B cell (primary cell): ENCODE measurements at regions of chr1 and their contacts with region 1.

Region 1: DNA sequence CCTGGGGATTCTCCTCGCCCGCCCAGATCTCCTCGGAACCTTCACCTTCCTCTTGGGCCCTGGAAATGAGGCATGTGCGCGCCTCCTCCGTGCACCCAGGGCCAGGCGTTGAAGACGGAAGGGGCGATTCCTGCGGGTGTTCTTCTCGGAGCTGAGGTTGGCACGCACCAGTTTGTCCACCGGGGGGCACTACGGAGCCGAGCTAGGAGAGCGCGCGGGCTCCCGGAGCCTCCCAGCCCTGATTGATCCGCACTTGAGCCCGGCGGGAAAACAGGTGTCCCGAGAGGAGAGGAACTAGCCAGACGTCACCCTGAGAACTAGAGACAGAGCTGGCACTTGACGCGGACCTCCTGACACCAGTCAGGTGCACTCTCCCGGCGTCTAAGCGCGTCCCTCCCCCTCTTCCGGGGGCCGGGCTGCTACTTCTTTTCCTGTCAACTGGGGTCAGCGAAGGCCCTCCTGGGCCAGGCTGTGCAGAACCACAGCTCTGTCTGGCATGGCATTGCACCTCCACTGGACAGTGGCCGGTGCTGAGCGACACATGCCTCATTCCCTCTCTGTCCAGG is 18.3 kb upstream of the SERINC2 start:
- DNase-seq: peak; percentile 87
- ATAC-seq: peak; percentile 93
- H3K4me3 ChIP-seq: peak overlapping the region; percentile 27 to 71 (median 55)
- H3K4me3 Mint-ChIP-seq: peak overlapping the region; percentile 87
- H3K27ac ChIP-seq: no peak overlapping the region
- H3K27ac Mint-ChIP-seq: peak overlapping the region; percentile 26
- H3K4me1 ChIP-seq: peaks cover 8 to 13% of the 10 kb centered on the region in 2 donors
- H3K4me1 Mint-ChIP-seq: peaks cover 13% of the 10 kb centered on the region
- H3K27me3 ChIP-seq: no peaks in the 10 kb centered on the region
- H3K27me3 Mint-ChIP-seq: no peaks in the 10 kb centered on the region
- CTCF ChIP-seq: peak; percentile 91

Region 2: GRCh38 chr1:31372961-31373896 is 21.5 kb before region 1 on chr1 and contains the start of gene FABP3:
- CTCF ChIA-PET with region 1: interaction called, 11 read pairs
- POLR2A ChIA-PET with region 1: no interaction called
- intact Hi-C with region 1: no loop called
- DNase-seq: peak; percentile 33
- ATAC-seq: peak; percentile 36
- H3K4me3 ChIP-seq: peak within 1 kb of the TSS in 4 of 5 experiments; percentile 15 to 45 (median 40)
- H3K4me3 Mint-ChIP-seq: peak within 1 kb of the TSS; percentile 85
- H3K27ac ChIP-seq: no peak within 1 kb of the TSS
- H3K27ac Mint-ChIP-seq: no peak within 1 kb of the TSS
- H3K4me1 ChIP-seq: peaks cover 8 to 17% of the 10 kb centered on the region in 2 donors
- H3K4me1 Mint-ChIP-seq: peaks cover 18% of the 10 kb centered on the region
- H3K27me3 ChIP-seq: peaks cover 0 to 15% (median 2%) of the 10 kb centered on the region in 4 experiments
- H3K27me3 Mint-ChIP-seq: peaks cover 21% of the 10 kb centered on the region
- CTCF ChIP-seq: no peak
- total RNA-seq, gene FABP3: not detected in 2 replicates

Region 3: DNA sequence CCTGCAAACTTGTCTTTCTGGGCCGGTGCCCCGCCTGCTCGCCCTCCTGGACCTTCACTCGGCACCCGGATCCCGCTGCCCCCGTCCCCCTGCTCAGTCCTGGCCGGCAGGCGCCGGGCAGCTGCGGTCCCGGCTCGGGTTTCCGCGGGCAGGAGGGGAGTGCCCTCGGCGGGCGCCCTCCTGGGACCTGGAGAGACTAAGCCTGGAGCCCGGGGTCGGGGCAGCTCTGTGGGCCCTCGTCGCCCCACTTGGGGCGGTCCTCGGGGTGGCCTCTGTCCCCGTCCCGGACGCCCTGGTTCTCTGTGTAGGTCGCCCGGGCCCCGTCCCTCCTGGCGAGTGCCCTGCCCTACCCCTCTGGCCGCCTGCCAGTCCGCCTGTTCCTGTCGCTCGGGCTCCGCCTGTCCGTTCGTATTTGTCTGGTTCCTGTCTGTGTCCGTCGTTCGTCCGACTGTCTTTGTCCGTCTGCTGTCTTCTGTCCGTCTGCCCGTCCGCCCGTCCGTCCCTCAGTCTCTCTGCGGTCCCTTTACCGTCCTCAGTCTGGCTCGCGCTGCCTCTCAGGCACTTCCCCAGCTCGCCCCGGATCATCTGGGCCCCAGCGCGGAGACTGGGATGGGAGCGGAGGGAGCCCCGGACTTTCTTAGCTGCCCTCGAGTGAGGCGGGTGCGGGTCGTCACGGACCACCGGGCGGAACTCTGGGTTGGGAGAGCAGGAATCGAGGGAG is 18.9 kb after region 1 on chr1:
- CTCF ChIA-PET with region 1: interaction called, 133 read pairs
- POLR2A ChIA-PET with region 1: no interaction called
- intact Hi-C with region 1: loop called (anchors 2 kb)
- DNase-seq: peak; percentile 55
- ATAC-seq: peak; percentile 53
- H3K4me3 ChIP-seq: peak overlapping the region; percentile 14 to 86 (median 57)
- H3K4me3 Mint-ChIP-seq: peak overlapping the region; percentile 89
- H3K27ac ChIP-seq: no peak overlapping the region
- H3K27ac Mint-ChIP-seq: no peak overlapping the region
- H3K4me1 ChIP-seq: peaks cover 17 to 18% of the 10 kb centered on the region in 2 donors
- H3K4me1 Mint-ChIP-seq: peaks cover 12% of the 10 kb centered on the region
- H3K27me3 ChIP-seq: peaks cover 0 to 61% (median 22%) of the 10 kb centered on the region in 4 experiments
- H3K27me3 Mint-ChIP-seq: peaks cover 61% of the 10 kb centered on the region
- CTCF ChIP-seq: no peak